Breast epithelium (tissue), 4 donors: ENCODE measurements at regions of chr6 and their contacts with region 1.

Region 1: DNA sequence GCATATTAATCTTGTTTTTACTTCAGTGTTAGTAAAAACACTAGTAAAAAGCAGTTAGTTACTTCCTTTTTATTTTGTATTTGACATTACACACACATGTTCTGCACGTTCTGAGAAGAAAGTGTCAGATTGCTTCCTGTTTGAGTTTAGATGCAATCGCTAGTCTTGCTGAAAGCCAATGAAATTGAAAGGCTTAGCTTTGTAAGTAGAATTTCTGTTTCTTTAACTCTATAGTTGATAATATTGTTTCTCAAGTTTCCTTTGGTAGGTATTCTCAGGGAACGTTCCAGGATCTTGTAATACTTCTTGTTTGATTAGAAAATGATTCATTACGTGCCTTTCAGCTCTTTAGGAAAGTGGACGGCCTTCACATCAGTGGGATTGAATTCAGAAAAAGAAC is 55.0 kb downstream of the CDKAL1 start:
- DNase-seq: no peak
- H3K4me3 ChIP-seq: no peak overlapping the region
- H3K27ac ChIP-seq: no peak overlapping the region
- H3K4me1 ChIP-seq: no peaks in the 10 kb centered on the region
- H3K27me3 ChIP-seq: no peaks in the 10 kb centered on the region
- CTCF ChIP-seq: no peak
- POLR2A ChIP-seq: no peak

Region 2: DNA sequence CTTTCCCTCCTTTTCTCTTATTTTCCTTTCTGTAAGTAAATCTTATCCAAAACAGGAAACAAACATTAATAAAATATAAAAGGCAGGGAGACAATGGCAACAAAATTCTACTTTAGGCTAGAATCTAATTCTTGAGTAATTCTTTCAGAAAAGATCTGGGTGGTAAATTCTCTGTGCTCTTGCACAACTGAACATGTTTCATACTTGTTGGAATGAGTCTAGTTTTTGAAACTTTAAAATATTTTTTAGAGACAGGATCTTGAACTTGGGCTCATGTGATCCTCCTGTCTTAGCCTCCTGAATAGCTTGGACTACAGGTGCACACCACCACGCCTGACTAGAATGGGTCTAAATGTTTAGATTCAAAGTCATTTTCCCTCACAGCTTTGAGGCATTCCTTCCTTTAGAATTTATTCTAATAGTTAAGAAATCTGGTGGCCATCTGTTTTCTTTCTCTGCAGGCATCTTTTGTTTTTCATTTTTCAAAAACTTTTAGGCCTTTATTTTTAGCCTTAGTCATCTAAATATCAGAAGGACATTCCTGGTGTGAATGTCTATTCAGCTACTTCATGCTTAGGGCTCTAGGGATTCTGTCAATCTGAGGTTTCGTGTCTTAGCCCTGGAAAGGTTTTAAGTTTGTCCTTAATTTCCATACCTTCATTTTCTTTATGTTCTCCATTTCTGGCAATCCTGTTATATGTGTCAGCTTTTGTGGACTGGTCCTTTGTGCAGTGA is 21.5 kb after region 1 on chr6:
- intact Hi-C with region 1: loop called (anchors 2 kb)
- DNase-seq: no peak
- H3K4me3 ChIP-seq: no peak overlapping the region
- H3K27ac ChIP-seq: no peak overlapping the region
- H3K4me1 ChIP-seq: no peaks in the 10 kb centered on the region
- H3K27me3 ChIP-seq: no peaks in the 10 kb centered on the region
- CTCF ChIP-seq: no peak
- POLR2A ChIP-seq: no peak